Activated naive CD4-positive, alpha-beta T cell treated with anti-CD3 and anti-CD28 coated beads for 36 hours (primary cell): ENCODE measurements at regions of chr2 and their contacts with region 1.

Region 1: GRCh38 chr2:223957092-223957851 is at the start of gene MRPL44:
- DNase-seq: peak; percentile 97
- H3K4me3 Mint-ChIP-seq: peak within 1 kb of the TSS; percentile 91
- H3K27ac Mint-ChIP-seq: peak within 1 kb of the TSS; percentile 88
- H3K4me1 Mint-ChIP-seq: peaks cover 80% of the 10 kb centered on the region
- H3K27me3 Mint-ChIP-seq: no peaks in the 10 kb centered on the region
- total RNA-seq, gene MRPL44: 39.1 to 41.3 TPM

Region 2: GRCh38 chr2:222860740-222861410 is 1096.4 kb before region 1 on chr2 and contains the start of gene ACSL3:
- CTCF ChIA-PET with region 1: no interaction called
- intact Hi-C with region 1: loop called (anchors 10 kb)
- DNase-seq: peak; percentile 95
- H3K4me3 Mint-ChIP-seq: peak within 1 kb of the TSS; percentile 75
- H3K27ac Mint-ChIP-seq: peak within 1 kb of the TSS; percentile 76
- H3K4me1 Mint-ChIP-seq: peaks cover 6% of the 10 kb centered on the region
- H3K27me3 Mint-ChIP-seq: no peaks in the 10 kb centered on the region
- total RNA-seq, gene ACSL3: 35.1 to 36.1 TPM

Region 3: DNA sequence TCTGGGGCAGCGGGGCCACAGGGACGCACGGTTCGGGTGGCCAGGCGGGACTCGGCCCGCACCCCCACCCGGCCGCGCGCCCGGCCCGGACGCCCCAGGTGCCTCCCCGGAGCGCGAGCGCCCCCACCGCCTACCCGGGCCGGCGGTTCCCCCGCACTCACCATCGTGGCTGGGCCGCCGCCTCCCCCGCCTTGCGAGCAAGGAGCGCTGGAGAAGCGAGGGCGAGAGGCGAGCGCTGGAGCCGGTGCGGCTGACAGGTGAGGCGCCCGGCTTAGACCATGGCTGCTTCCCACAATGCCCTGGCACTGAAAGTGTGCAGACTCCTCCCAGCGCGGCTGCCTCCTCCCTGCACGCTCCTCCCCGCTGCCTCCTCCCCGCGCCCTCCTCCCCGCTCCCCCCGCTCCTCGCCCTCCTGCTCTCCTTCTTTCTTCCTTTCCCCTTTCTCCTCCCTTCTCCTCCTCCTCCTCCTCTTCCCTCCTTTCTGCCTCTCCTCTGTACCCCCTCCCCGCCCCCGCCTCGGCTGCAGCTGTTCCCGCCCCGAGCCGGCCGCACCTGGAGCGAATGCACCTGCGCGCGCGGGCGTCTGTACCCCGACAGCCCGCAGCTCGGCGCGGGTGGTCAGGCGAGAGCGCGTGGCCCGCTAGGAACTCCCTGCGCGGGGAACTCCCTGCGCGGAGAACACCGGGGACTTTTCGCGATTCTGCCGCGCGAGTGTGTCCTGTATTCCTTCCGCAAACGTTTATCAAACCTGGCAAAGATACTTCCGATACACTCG is 119.8 kb before region 1 on chr2 and contains the start of gene AP1S3:
- CTCF ChIA-PET with region 1: interaction called, 3 read pairs
- intact Hi-C with region 1: loop called (anchors 1 kb)
- DNase-seq: peak; percentile 83
- H3K4me3 Mint-ChIP-seq: peak within 1 kb of the TSS; percentile 97
- H3K27ac Mint-ChIP-seq: peak within 1 kb of the TSS; percentile 53
- H3K4me1 Mint-ChIP-seq: peaks cover 13% of the 10 kb centered on the region
- H3K27me3 Mint-ChIP-seq: peaks cover 2% of the 10 kb centered on the region
- total RNA-seq, gene AP1S3: 10.7 to 12.8 TPM

Region 4: GRCh38 chr2:223993621-223994232 is 36.5 kb after region 1 on chr2:
- CTCF ChIA-PET with region 1: interaction called, 8 read pairs
- intact Hi-C with region 1: loop called (anchors 1 kb)
- DNase-seq: peak; percentile 82
- H3K4me3 Mint-ChIP-seq: no peak overlapping the region
- H3K27ac Mint-ChIP-seq: peak overlapping the region; percentile 3
- H3K4me1 Mint-ChIP-seq: peaks cover 31% of the 10 kb centered on the region
- H3K27me3 Mint-ChIP-seq: no peaks in the 10 kb centered on the region

Region 5: DNA sequence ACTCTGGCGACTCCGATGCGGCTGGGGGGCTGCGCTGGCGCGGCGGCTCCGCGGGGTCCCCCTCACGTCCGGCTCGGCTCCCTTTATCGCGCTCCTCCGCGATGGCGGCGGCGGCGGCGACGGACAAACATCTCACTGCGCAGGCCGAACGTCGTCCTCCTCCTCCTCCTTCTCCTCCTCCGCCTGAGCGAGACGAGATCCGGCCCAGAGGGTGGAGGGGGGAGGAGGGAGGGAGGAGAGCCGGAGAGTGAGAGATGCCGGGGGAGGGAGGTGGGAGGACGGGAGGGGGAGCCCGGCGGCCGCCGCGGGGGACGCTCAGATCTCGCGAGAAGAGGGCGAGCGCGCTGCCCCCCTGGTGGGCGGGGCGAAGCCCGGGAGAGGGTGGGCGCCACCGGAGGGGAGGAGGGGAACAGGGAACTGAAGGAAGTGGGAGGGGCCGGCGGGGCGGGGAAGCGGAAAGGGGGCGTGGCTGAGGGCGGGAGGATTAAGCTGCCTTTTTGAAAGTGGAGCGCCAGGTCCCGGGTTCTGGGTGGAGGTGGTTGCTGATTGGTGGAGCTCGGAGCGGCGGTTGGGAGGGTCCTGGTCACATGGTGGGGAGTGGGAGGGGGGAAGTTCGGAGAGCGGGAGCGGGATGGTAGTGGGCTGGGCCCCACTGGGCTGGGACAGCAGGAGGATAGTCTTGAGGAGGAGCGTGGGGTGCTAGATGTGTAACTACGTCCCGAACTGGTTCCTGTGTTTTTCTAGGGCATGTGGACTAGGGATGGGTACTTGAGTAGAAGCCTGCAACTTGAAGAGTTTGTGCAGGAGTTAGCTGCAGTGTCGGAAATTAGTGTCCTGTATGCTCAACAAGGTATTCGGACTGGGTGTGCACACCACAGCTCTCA is 628.2 kb after region 1 on chr2 and contains the start of gene CUL3:
- CTCF ChIA-PET with region 1: no interaction called
- intact Hi-C with region 1: loop called (anchors 2 kb)
- DNase-seq: peak; percentile 100
- H3K4me3 Mint-ChIP-seq: peak within 1 kb of the TSS; percentile 92
- H3K27ac Mint-ChIP-seq: peak within 1 kb of the TSS; percentile 89
- H3K4me1 Mint-ChIP-seq: peaks cover 31% of the 10 kb centered on the region
- H3K27me3 Mint-ChIP-seq: no peaks in the 10 kb centered on the region
- total RNA-seq, gene CUL3: 61.7 to 66.0 TPM